ENCODE measurements at regions of chr4 and their contacts with region 1.

Region 1: DNA sequence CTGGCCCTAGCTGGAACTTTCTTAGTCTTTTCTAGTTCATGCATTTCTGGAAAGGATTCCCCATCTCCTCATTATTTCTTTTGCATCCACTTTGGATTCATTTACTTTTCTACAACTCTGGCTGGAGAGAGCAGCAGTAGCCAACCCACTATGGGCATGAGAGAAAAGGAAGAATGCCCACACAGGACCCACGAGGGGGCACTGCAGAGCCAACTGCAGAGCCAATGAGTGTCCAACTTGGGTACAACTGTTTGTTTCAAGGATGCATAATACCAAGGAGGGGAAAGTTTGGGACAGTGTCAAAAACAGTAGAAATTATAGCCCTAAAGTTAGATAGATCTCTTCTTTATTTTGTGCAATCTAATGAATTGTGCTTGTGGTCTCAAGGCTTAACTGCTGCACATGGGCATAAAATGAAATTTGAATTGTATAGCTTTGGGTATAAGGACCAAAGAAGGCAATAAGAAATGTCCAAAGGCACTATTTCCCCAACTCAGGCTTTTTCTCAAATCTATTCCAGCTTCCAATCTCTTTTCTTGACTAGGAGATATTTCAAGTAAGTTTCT is 230.6 kb downstream of the NSUN7 start:
- DNase-seq: no peak
- H3K4me3 ChIP-seq: no peak overlapping the region
- H3K27ac ChIP-seq: peak overlapping the region in 6 of 59 donors; percentile 4 to 40 (median 22)
- H3K27me3 ChIP-seq: no peaks in the 10 kb centered on the region
- CTCF ChIP-seq: peak in 51 of 56 donors; percentile 19 to 74 (median 46)

Region 2: DNA sequence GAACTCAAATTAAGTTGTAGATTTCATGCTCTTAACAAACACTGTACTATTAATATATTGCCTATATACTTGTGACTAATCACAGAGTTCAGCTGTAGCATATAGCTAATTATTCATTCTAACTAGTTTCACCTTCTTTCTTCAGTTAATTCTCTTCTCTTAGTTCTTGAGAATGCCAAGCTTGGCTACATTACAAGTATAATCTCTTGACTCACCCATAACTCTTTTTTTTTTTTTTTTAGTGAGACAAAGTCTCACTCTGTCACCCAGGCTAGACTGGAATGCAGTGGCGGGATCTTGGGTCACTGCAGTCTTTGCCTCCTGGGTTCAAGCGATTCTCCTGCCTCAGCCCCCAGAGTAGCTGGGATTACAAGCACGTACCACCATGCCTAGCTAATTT is 1913.0 kb before region 1 on chr4:
- intact Hi-C with region 1: no loop called
- DNase-seq: no peak
- H3K4me3 ChIP-seq: no peak overlapping the region
- H3K27ac ChIP-seq: no peak overlapping the region
- H3K27me3 ChIP-seq: no peaks in the 10 kb centered on the region
- CTCF ChIP-seq: no peak

Region 3: DNA sequence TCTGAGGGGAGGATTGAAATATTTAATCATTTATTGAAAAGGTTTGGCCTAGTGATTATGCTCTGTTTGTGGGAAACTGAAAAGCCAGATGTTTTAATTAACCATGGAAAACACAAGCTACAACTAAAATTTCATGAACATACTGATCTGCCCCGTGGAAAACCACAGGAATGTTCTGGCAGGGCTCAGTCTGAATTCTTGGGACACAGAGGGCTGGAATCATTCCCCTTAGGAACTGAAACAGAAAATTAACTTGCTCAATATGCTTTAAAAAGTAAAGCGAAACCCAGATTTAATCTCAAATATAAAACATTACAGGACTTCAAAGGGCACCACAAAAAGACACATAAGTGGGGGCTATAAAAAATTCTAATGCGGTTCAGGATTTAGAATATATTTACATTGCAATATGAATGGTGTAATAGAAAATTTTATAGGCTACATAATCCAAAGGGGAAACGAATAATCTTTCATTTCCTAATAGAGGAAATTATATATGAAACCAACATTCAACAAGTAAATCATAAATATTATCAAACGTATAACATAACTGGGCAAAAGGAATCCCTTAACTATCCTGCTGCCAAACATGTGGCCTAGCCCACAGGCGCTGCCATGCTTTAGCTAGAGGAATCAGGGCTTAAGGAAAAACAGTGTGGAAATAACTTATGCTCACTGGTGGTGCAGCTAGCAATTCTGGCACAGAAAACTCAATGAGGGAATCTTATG is 163.1 kb after region 1 on chr4:
- intact Hi-C with region 1: loop called in 1 of 2 experiments (anchors 10 kb)
- DNase-seq: no peak
- H3K4me3 ChIP-seq: peak overlapping the region in 2 of 59 donors; percentile 5 to 8
- H3K27ac ChIP-seq: peak overlapping the region; percentile 74 to 100 (median 95)
- H3K27me3 ChIP-seq: no peaks in the 10 kb centered on the region
- CTCF ChIP-seq: no peak